Activated CD4-positive, alpha-beta memory T cell treated with anti-CD3 and anti-CD28 coated beads for 36 hours (primary cell): ENCODE measurements at regions of chr10 and their contacts with region 1.

Region 1: GRCh38 chr10:63388421-63389031 is 77.3 kb downstream of the JMJD1C start:
- DNase-seq: no peak
- H3K4me3 Mint-ChIP-seq: peak overlapping the region; percentile 2
- H3K27ac Mint-ChIP-seq: peak overlapping the region; percentile 7
- H3K4me1 Mint-ChIP-seq: peaks cover 66% of the 10 kb centered on the region
- H3K27me3 Mint-ChIP-seq: no peaks in the 10 kb centered on the region

Region 2: GRCh38 chr10:63355682-63356081 is 32.8 kb before region 1 on chr10:
- CTCF ChIA-PET with region 1: no interaction called
- POLR2A ChIA-PET with region 1: no interaction called
- intact Hi-C with region 1: loop called (anchors 2 kb)
- DNase-seq: no peak
- H3K4me3 Mint-ChIP-seq: no peak overlapping the region
- H3K27ac Mint-ChIP-seq: no peak overlapping the region
- H3K4me1 Mint-ChIP-seq: peaks cover 25% of the 10 kb centered on the region
- H3K27me3 Mint-ChIP-seq: no peaks in the 10 kb centered on the region